ENCODE measurements at regions of chr9 and their contacts with region 1.

Region 1: DNA sequence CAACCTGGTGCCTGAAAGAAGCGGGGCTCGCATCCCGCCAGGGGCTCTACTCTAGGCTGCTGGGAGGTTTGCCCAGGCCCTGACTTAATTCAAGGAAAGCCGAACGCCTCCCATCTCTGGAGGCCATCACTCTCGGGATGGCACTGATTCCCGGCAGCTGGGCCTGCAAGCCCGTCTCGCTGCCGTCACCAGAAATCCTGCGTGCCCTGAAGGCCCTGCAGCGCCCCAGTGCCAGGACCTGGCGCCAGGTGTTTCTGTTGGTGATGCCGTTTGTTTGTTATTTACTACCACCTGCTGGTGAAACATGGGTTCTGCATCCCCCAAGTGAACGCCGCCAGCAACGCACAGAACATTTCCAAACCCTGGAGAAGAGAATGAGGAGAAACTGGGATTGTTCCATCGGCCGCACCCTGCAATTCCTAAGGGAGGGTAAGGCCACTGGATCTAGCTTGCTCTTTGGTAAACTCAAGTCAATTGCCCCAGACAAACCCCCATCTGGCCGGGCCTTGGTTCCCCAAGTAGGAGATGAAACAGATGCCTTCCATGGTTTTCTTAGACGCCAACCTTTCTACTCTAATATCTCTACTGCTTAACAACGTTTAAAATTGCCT is 77.9 kb downstream of the AK8 start:
- DNase-seq: peak; percentile 80 to 85 (median 83)
- H3K4me3 ChIP-seq: peak overlapping the region in 4 of 7 experiments; percentile 4 to 63 (median 25)
- H3K27ac ChIP-seq: no peak overlapping the region
- H3K4me1 ChIP-seq: peaks cover 0 to 35% (median 23%) of the 10 kb centered on the region in 4 experiments
- H3K27me3 ChIP-seq: peaks cover 0 to 6% (median 0%) of the 10 kb centered on the region in 5 experiments

Region 2: DNA sequence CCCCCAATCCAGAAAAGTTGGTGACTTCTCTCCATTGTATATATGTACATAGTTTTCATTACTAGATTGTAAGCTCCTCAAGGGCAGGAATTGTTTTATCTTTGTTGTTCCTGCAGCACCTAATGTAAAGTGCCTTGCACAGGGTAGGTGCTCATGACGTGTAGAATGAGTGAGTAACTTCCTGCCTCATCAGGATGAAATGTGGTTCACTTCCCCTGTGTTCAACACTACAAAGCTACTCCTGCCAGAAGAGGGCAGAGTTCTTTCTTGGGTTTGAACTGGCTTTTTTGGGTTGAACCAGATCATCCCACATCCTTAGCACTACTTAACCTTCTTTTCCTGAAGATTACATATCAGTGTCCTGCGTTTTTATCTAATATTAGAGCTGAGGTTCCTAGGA is 106.0 kb before region 1 on chr9:
- CTCF ChIA-PET with region 1: interaction called, 28 read pairs
- POLR2A ChIA-PET with region 1: no interaction called
- DNase-seq: peak; percentile 72 to 82 (median 78)
- H3K4me3 ChIP-seq: no peak overlapping the region
- H3K27ac ChIP-seq: no peak overlapping the region
- H3K4me1 ChIP-seq: no peaks in the 10 kb centered on the region
- H3K27me3 ChIP-seq: no peaks in the 10 kb centered on the region

Region 3: DNA sequence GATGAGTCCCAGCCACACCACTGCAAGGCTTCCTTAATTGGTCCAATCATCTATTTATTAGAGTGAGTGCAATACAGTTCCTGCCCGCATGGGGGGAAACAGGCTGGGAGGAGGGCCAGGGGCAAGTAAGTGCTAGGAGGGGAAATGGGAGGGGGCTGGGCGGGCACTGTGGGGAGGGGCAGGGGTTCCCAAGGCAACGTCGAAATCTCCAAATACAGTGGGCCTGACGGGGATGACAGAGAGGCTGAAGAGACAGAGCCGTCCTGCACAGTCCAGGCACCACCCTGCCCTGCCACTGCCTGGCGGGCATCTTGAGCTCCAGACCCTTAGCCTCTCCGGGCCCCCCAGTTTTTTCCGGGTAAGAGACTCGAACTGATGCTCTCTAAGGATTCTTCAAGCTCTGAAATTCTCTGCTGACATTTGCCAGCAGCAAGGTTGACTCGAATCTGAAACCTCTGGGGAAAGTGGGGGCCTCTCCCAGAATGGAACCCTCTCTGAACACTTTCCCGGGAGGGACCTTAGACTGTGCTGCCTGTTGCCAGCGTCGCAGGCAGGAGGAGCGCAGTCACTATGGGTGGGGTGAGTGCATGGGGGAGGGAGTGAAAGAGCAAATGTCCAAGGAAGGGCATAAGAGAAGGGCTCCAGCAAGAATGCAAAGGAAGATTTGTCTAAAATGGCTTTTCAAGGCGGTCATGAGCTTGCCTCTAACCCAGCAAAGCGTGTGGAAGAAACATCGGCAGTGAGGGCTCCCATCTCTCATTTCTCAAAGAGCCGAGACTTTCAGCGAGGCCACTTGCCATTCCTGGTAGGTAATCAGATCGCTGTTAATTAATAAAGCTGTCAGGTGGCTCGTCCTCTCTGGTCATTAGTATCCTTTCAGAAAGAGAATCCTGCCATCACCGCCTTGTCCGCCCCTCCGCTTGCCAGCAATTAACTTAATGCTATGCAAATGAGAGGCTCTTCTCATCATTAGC is 30.9 kb before region 1 on chr9:
- CTCF ChIA-PET with region 1: interaction called, 27 read pairs
- POLR2A ChIA-PET with region 1: interaction called, 5 read pairs
- DNase-seq: peak; percentile 86 to 92 (median 92)
- H3K4me3 ChIP-seq: peak overlapping the region; percentile 65 to 98 (median 90)
- H3K27ac ChIP-seq: peak overlapping the region; percentile 85 to 92
- H3K4me1 ChIP-seq: peaks cover 3 to 21% (median 20%) of the 10 kb centered on the region in 4 experiments
- H3K27me3 ChIP-seq: no peaks in the 10 kb centered on the region

Region 4: GRCh38 chr9:132837501-132838286 is 37.6 kb after region 1 on chr9:
- CTCF ChIA-PET with region 1: no interaction called
- POLR2A ChIA-PET with region 1: no interaction called
- DNase-seq: no peak
- H3K4me3 ChIP-seq: no peak overlapping the region
- H3K27ac ChIP-seq: no peak overlapping the region
- H3K4me1 ChIP-seq: no peaks in the 10 kb centered on the region
- H3K27me3 ChIP-seq: peaks cover 0 to 2% (median 0%) of the 10 kb centered on the region in 5 experiments

Region 5: DNA sequence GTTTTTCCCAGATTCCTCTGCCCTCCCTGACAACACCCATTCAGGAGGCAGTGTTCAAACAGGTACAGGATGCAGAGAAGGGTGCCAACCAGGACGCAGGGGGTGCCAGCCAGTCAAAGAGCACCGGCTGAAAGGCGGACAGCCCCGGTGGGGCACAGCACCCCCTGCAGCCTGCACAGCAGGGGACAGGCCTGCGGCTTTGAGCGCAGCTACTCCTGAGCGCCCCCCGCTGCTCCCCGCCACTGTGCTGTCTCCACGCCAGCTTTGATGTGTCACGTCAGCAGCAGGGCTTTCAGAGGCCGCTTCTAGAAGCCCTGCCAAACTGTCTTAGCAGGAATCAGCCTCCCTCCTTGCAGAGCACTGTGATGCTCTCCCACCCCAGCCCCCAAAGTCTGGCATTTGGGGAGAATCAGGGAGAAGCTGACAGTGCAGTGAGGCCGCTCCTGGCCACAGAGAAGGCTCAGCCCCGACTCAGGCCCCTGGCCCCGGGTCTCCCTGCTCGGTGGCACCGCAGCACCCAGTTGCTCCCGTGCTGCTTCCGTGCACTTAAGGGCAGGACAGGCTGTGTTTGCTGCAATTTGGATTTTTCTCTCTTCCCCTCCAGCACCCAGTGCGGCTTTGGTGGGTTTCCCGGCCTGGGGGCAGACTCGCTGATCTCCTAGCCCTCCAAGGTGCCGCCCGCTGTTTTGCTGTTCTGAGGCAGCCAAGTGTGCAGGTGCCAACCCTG is 57.6 kb after region 1 on chr9:
- CTCF ChIA-PET with region 1: no interaction called
- POLR2A ChIA-PET with region 1: no interaction called
- DNase-seq: no peak
- H3K4me3 ChIP-seq: no peak overlapping the region
- H3K27ac ChIP-seq: no peak overlapping the region
- H3K4me1 ChIP-seq: no peaks in the 10 kb centered on the region
- H3K27me3 ChIP-seq: no peaks in the 10 kb centered on the region

Region 6: DNA sequence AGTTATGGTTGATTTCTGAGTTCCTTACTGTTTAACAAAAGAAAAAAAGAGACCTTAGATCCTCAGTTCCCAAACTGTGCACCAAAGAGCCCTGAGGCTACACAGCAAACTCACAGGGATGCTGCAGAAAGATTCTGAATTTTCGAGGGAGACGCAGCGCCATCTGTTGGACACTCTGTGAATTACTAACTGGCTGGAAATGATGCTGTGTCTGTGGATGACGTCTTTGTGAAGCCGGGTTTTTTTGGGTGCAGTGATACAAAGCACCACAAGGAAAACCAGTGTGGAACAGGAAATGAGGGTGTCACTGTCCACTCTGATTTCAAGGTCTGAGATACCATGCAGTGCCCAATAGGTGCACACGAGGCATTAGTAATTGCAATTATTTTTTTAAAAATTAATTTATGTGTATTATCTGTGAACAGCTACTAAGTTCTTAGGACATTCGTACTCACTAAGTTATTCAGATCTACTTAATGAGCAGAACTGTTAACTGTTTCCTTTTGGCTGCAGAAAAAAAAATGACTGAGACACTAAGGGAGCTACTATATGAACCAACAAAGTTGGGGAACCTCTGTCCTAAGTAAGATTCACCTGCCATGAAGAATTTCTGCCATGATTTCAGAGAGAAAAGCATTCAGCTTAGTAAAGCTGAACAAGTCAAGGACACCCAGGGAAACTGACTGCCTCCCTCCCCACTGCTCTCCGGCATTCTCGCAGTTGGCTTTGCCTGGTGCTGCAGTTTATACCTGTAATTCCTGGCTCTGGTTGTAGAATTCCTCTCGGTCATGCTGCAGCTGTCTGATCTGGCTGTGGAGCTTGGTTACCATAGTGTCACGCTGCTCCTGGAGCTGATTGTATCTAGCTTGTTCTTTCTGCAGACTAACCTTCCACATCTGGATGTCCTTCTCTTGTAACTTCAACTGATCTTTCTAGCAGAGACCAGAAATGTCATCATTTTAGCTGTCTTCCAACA is 102.0 kb after region 1 on chr9:
- CTCF ChIA-PET with region 1: interaction called, 11 read pairs
- POLR2A ChIA-PET with region 1: no interaction called
- DNase-seq: peak; percentile 87 to 95 (median 92)
- H3K4me3 ChIP-seq: no peak overlapping the region
- H3K27ac ChIP-seq: no peak overlapping the region
- H3K4me1 ChIP-seq: no peaks in the 10 kb centered on the region
- H3K27me3 ChIP-seq: no peaks in the 10 kb centered on the region

Measured in common myeloid progenitor, CD34-positive (primary cell).